Breast epithelium (tissue), 4 donors: ENCODE measurements at regions of chr7 and their contacts with region 1.

Region 1: GRCh38 chr7:47460344-47460989 is 121.4 kb downstream of the TNS3 start:
- DNase-seq: no peak
- H3K4me3 ChIP-seq: no peak overlapping the region
- H3K27ac ChIP-seq: no peak overlapping the region
- H3K4me1 ChIP-seq: peaks cover 0 to 11% of the 10 kb centered on the region in 2 donors
- H3K27me3 ChIP-seq: no peaks in the 10 kb centered on the region
- CTCF ChIP-seq: no peak
- POLR2A ChIP-seq: no peak

Region 2: GRCh38 chr7:46764100-46764936 is 696.1 kb before region 1 on chr7:
- intact Hi-C with region 1: no loop called
- DNase-seq: no peak
- H3K4me3 ChIP-seq: no peak overlapping the region
- H3K27ac ChIP-seq: peak overlapping the region in 1 of 2 donors; percentile 40
- H3K4me1 ChIP-seq: peaks cover 0 to 4% of the 10 kb centered on the region in 2 donors
- H3K27me3 ChIP-seq: no peaks in the 10 kb centered on the region
- CTCF ChIP-seq: no peak
- POLR2A ChIP-seq: no peak

Region 3: DNA sequence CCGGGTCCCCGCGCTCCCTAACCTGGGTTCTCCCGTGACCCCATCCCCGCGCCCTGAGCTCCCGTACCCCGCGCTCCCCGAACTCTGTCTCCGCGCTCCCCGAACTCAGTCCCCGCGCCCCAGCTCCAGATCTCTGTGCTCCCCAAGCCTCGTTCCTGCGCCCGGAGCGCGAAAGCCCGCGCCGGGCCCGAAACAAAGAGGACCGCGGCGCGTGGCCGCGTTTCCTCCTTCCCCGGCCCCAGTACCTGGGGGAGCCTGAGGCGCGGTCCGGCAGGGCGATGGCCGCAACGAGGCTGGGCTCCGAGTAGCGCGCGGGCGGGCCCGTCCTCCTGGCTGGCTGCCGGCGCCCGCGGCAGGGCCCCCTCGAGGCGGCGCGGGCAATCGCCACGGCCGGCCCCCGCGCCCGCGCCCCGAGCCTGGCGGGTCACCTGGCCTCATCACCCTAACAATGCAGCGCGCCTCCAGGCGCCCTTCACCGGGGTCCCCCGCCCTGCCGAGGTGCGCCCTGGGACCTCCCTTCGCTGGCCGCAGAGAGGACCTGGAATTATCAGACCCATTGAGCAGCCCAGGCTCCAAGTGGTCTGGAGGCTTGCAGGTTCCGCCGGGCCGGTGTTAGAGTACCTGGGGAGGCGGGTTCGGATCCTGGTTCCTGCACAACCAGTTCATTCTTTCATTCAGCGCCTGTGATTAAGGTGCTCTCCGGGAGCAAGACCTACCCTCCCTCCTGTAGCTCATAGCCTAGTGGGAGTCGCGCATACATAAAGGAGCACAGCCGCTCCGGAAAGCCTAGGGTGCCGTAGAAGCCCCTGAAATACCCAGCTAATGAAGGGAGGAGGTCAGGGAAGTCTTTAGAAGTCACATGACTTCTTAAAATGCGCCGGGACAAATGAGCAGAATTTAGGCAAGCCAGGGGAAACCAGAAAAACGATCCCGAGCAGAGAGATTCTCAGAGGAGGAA is 121.6 kb after region 1 on chr7 and contains the start of gene TNS3:
- intact Hi-C with region 1: loop called (anchors 1 kb)
- DNase-seq: no peak
- H3K4me3 ChIP-seq: peak within 1 kb of the TSS; percentile 68 to 89 (median 71)
- H3K27ac ChIP-seq: peak within 1 kb of the TSS; percentile 68 to 85
- H3K4me1 ChIP-seq: peaks cover 0 to 15% of the 10 kb centered on the region in 2 donors
- H3K27me3 ChIP-seq: no peaks in the 10 kb centered on the region
- CTCF ChIP-seq: peak in 1 of 3 donors; percentile 29
- POLR2A ChIP-seq: no peak
- total RNA-seq, gene TNS3: 41.0 to 78.1 (median 56.2) TPM

Region 4: GRCh38 chr7:47901542-47901941 is 441.1 kb after region 1 on chr7:
- intact Hi-C with region 1: no loop called
- DNase-seq: no peak
- H3K4me3 ChIP-seq: no peak overlapping the region
- H3K27ac ChIP-seq: no peak overlapping the region
- H3K4me1 ChIP-seq: no peaks in the 10 kb centered on the region
- H3K27me3 ChIP-seq: no peaks in the 10 kb centered on the region
- CTCF ChIP-seq: no peak
- POLR2A ChIP-seq: no peak